ENCODE measurements at regions of chr1 and their contacts with region 1.

Region 1: GRCh38 chr1:58546520-58547308 is at the start of gene OMA1:
- DNase-seq: peak; percentile 99
- ATAC-seq: peak; percentile 99
- H3K4me3 ChIP-seq: peak within 1 kb of the TSS; percentile 55 to 89
- H3K27ac ChIP-seq: peak within 1 kb of the TSS; percentile 87 to 94
- H3K4me1 ChIP-seq: peaks cover 0 to 2% of the 10 kb centered on the region in 2 donors
- H3K27me3 ChIP-seq: no peaks in the 10 kb centered on the region
- total RNA-seq, gene OMA1: 15.4 to 22.0 TPM

Region 2: GRCh38 chr1:58515794-58516401 is 30.8 kb before region 1 on chr1:
- intact Hi-C with region 1: loop called in 1 of 2 experiments (anchors 2 kb)
- DNase-seq: no peak
- ATAC-seq: peak; percentile 83
- H3K4me3 ChIP-seq: no peak overlapping the region
- H3K27ac ChIP-seq: no peak overlapping the region
- H3K4me1 ChIP-seq: no peaks in the 10 kb centered on the region
- H3K27me3 ChIP-seq: no peaks in the 10 kb centered on the region

Region 3: GRCh38 chr1:58584082-58584895 is 37.6 kb after region 1 on chr1:
- intact Hi-C with region 1: loop called (anchors 2 to 5 kb)
- DNase-seq: peak; percentile 88 to 89
- ATAC-seq: peak; percentile 93
- H3K4me3 ChIP-seq: no peak overlapping the region
- H3K27ac ChIP-seq: peak overlapping the region; percentile 78 to 96
- H3K4me1 ChIP-seq: peaks cover 5 to 9% of the 10 kb centered on the region in 2 donors
- H3K27me3 ChIP-seq: no peaks in the 10 kb centered on the region

Measured in aorta (tissue), 5 donors.